ENCODE measurements at regions of chr17 and their contacts with region 1.

Region 1: GRCh38 chr17:81636505-81637288 is at the starts of genes NPLOC4 and TSPAN10:
- DNase-seq: peak; percentile 58 to 93 (median 79)
- ATAC-seq: peak; percentile 89
- H3K4me3 ChIP-seq: peak within 1 kb of the TSS; percentile 94
- H3K4me3 Mint-ChIP-seq: peak within 1 kb of the TSS; percentile 97
- H3K27ac ChIP-seq: peak within 1 kb of the TSS; percentile 23 to 29
- H3K27ac Mint-ChIP-seq: peak within 1 kb of the TSS; percentile 86
- H3K4me1 ChIP-seq: peaks cover 37% of the 10 kb centered on the region
- H3K4me1 Mint-ChIP-seq: peaks cover 18% of the 10 kb centered on the region
- H3K27me3 ChIP-seq: no peaks in the 10 kb centered on the region
- H3K27me3 Mint-ChIP-seq: no peaks in the 10 kb centered on the region
- CTCF ChIP-seq: no peak
- total RNA-seq, gene NPLOC4: 61.0 to 62.4 TPM
- total RNA-seq, gene TSPAN10: 0.17 TPM in 1 of 2 experiments, not detected in the other

Region 2: GRCh38 chr17:81666342-81667191 is 29.9 kb after region 1 on chr17 and contains the starts of genes CCDC137 and OXLD1:
- CTCF ChIA-PET with region 1: no interaction called
- POLR2A ChIA-PET with region 1: interaction called, 11 read pairs
- intact Hi-C with region 1: loop called (anchors 1 to 2 kb)
- DNase-seq: peak; percentile 81 to 96 (median 91)
- ATAC-seq: peak; percentile 84
- H3K4me3 ChIP-seq: peak within 1 kb of the TSS; percentile 90
- H3K4me3 Mint-ChIP-seq: peak within 1 kb of the TSS; percentile 97
- H3K27ac ChIP-seq: peak within 1 kb of the TSS; percentile 73 to 85
- H3K27ac Mint-ChIP-seq: peak within 1 kb of the TSS; percentile 91
- H3K4me1 ChIP-seq: peaks cover 67% of the 10 kb centered on the region
- H3K4me1 Mint-ChIP-seq: peaks cover 50% of the 10 kb centered on the region
- H3K27me3 ChIP-seq: no peaks in the 10 kb centered on the region
- H3K27me3 Mint-ChIP-seq: no peaks in the 10 kb centered on the region
- CTCF ChIP-seq: no peak
- total RNA-seq, gene CCDC137: 20.8 to 21.7 TPM
- total RNA-seq, gene OXLD1: 24.6 to 25.3 TPM

Region 3: DNA sequence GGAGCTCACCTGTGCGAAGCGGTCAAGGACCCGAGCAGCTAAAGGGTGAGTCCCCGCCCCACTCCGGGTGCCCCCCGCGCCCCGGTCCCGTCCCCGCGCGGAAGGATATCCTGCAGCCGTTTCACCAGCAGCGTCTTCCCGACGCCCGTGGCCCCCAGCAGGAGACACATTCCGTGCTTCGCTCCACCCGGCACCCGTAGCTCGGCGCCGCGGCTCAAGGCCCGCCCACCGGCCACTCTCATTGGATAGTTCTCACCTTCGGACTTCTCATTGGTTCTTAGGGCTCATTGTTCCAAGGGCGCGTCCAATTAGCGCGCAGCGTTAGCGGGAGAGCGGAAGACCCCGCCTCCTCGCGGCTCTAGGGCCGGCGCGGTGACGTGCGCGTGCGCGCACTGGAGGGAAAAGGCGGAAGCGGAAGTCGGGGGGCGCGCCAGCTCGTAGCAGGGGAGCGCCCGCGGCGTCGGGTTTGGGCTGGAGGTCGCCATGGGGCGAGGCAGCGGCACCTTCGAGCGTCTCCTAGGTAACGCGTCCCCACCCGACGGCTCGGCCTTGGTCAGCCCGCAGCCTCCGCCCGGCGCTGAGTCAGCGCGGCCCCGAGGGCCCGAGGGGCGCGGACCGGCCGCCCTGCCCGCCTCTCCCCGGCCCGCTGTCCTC is 47.0 kb after region 1 on chr17 and contains the starts of genes ARL16 and HGS:
- CTCF ChIA-PET with region 1: no interaction called
- POLR2A ChIA-PET with region 1: interaction called, 9 read pairs
- intact Hi-C with region 1: loop called in 1 of 2 experiments (anchors 1 kb)
- DNase-seq: peak; percentile 94 to 99 (median 96)
- ATAC-seq: peak; percentile 99
- H3K4me3 ChIP-seq: peak within 1 kb of the TSS; percentile 98
- H3K4me3 Mint-ChIP-seq: peak within 1 kb of the TSS; percentile 100
- H3K27ac ChIP-seq: peak within 1 kb of the TSS; percentile 67 to 69
- H3K27ac Mint-ChIP-seq: peak within 1 kb of the TSS; percentile 81
- H3K4me1 ChIP-seq: peaks cover 51% of the 10 kb centered on the region
- H3K4me1 Mint-ChIP-seq: peaks cover 24% of the 10 kb centered on the region
- H3K27me3 ChIP-seq: no peaks in the 10 kb centered on the region
- H3K27me3 Mint-ChIP-seq: no peaks in the 10 kb centered on the region
- CTCF ChIP-seq: no peak
- total RNA-seq, gene ARL16: 35.7 to 38.5 TPM
- total RNA-seq, gene HGS: 118 to 127 TPM

Region 4: DNA sequence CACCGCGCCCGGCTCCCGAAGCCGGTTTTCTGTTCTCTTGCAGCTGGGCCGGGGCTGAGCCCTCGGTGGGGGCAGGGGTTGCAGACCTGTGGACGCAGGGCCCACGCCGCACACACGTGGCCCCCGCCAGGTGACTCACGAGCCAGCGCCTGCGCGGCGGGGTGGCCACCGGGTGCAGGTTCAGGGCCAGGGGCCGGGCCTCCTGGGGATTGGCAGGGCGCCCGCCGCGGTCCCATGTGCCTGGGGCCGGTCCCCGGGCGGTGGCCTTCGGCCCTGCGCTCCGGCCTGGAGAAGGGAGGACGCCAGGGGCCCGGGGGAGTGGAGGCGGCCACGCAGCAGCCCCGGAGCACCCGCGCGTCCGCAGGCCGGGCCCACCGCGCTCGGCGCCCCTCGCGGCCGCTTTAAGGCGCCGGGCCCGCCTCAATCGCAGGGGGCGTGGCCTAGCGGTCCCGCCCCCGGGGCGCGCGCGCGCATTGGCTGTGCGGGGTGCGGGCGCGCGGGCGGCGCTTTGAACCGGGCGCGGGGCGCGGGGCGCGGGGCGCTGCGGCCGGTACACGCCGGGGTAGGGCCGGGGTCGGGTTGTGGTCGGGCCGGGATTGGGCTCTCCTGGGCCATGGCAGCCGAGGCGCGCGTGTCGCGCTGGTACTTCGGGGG is 75.2 kb after region 1 on chr17 and contains the start of gene SLC25A10:
- CTCF ChIA-PET with region 1: no interaction called
- POLR2A ChIA-PET with region 1: no interaction called
- intact Hi-C with region 1: loop called in 1 of 2 experiments (anchors 2 kb)
- DNase-seq: peak; percentile 53 to 91 (median 72)
- ATAC-seq: peak; percentile 80
- H3K4me3 ChIP-seq: peak within 1 kb of the TSS; percentile 49
- H3K4me3 Mint-ChIP-seq: peak within 1 kb of the TSS; percentile 90
- H3K27ac ChIP-seq: no peak within 1 kb of the TSS
- H3K27ac Mint-ChIP-seq: peak within 1 kb of the TSS; percentile 77
- H3K4me1 ChIP-seq: peaks cover 31% of the 10 kb centered on the region
- H3K4me1 Mint-ChIP-seq: peaks cover 27% of the 10 kb centered on the region
- H3K27me3 ChIP-seq: no peaks in the 10 kb centered on the region
- H3K27me3 Mint-ChIP-seq: no peaks in the 10 kb centered on the region
- CTCF ChIP-seq: peak; percentile 17
- total RNA-seq, gene SLC25A10: 4.6 TPM

Region 5: GRCh38 chr17:82314727-82315605 is 678.3 kb after region 1 on chr17:
- CTCF ChIA-PET with region 1: no interaction called
- POLR2A ChIA-PET with region 1: no interaction called
- intact Hi-C with region 1: no loop called
- DNase-seq: peak in 1 of 14 experiments; percentile 23
- ATAC-seq: no peak
- H3K4me3 ChIP-seq: peak overlapping the region; percentile 81
- H3K4me3 Mint-ChIP-seq: peak overlapping the region; percentile 99
- H3K27ac ChIP-seq: peak overlapping the region in 1 of 2 donors; percentile 80
- H3K27ac Mint-ChIP-seq: peak overlapping the region; percentile 58
- H3K4me1 ChIP-seq: peaks cover 50% of the 10 kb centered on the region
- H3K4me1 Mint-ChIP-seq: peaks cover 30% of the 10 kb centered on the region
- H3K27me3 ChIP-seq: no peaks in the 10 kb centered on the region
- H3K27me3 Mint-ChIP-seq: no peaks in the 10 kb centered on the region
- CTCF ChIP-seq: no peak

Measured in CD4-positive, alpha-beta T cell (primary cell).